ENCODE measurements at regions of chr18 and their contacts with region 1.

Region 1: DNA sequence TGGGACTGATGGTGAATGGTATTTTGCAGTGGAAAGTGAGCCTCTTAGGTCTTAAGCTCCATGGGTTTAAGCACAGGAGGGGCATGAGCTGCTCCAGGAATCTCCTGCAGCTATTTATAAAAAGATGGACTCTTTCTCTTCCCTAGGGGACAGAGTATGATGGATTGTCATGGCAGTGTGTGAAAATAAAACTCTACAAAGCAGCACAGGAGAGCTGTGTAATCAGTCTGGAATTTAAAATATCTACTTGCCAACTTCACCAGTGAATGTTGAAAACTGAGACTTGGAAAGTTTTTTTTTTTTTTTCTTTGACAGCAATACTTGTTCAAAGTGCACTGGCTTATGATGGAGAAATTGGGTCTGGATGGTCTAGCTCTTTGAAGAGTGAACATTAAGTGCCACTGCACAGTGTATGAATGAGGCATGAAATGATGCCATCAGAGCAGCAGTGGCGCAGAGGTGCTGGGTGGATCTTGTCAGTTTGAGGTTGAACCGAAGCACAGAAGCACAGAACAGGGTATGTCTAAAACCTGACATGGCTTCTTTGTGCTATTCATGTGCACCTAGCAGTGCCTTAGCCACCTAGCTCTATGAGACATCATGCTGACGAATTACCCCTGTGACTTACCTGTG is 245.4 kb downstream of the PTPRM start:
- DNase-seq: peak; percentile 80
- ATAC-seq: peak; percentile 94
- H3K4me3 ChIP-seq: no peak overlapping the region
- H3K27ac ChIP-seq: peak overlapping the region; percentile 52
- H3K4me1 ChIP-seq: peaks cover 24% of the 10 kb centered on the region
- H3K27me3 ChIP-seq: no peaks in the 10 kb centered on the region
- CTCF ChIP-seq: no peak
- EP300 ChIP-seq: no peak
- POLR2A ChIP-seq: no peak
- RAD21 ChIP-seq: no peak

Region 2: DNA sequence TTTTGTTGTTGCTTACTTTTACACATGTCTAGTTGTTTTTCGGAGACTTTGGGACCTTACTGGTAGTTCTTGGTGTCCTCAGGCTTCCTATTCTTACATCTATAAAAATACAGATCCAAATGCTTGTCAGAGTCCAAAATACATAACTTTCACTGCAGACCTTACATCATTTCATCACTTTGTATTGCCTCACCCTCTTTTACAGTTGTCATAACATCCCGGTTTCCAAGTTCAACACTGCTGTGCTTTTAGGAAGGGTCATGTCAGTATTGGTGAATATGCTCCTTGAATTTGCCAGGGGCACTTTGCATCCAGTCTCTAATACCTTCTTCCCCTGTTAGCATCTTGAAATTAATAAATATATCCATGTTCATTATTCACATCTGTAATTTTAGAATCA is 278.5 kb after region 1 on chr18:
- CTCF ChIA-PET with region 1: no interaction called
- POLR2A ChIA-PET with region 1: no interaction called
- in situ Hi-C with region 1: no loop called
- intact Hi-C with region 1: no loop called
- DNase-seq: no peak
- ATAC-seq: no peak
- H3K4me3 ChIP-seq: no peak overlapping the region
- H3K27ac ChIP-seq: no peak overlapping the region
- H3K4me1 ChIP-seq: no peaks in the 10 kb centered on the region
- H3K27me3 ChIP-seq: no peaks in the 10 kb centered on the region
- CTCF ChIP-seq: no peak
- EP300 ChIP-seq: no peak
- POLR2A ChIP-seq: no peak
- RAD21 ChIP-seq: no peak

Region 3: DNA sequence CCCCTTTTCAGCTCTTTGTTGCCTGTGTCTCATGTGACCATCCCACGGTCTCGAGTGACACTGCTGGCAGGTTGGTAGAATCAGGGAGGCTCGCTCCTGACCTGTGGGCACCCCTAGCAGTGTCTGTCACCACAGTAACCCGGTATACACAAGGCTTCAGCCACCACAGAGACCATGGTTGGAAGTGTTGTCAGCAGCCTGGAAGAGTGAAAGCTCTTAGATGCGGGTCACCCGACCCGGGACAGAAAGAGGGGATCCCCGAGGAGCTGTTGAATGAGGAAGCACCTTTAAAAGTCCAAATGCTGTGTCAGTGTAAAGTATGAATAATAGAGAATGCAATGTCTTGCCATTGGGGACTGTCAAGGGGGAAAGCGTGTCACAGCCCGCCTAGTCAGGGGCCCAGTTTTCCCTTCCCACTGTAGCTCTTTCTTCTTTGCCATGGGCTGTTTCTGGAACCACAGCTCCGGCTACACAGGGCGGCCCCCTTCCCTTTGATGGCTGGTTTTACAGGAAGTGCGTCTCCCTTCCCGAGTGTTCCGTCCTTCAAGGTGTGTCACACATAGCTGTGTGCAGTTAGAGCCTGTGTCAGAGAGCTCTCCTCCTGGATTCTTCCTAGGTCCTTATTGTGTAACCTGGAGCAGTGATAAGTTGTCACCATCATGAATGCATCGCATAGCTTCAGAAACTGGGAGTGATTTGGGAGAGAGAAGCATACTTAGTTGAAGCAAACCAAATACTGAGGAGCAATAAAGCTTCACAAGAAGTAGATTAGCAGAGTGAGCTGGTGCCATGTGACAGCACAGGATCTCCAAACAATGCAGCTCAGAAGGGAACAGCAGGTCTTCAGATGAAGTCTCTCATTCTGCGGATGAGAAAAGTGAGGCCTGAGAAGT is 974.2 kb after region 1 on chr18:
- CTCF ChIA-PET with region 1: no interaction called
- POLR2A ChIA-PET with region 1: no interaction called
- in situ Hi-C with region 1: no loop called
- intact Hi-C with region 1: loop called (anchors 5 kb)
- DNase-seq: no peak
- ATAC-seq: no peak
- H3K4me3 ChIP-seq: no peak overlapping the region
- H3K27ac ChIP-seq: no peak overlapping the region
- H3K4me1 ChIP-seq: peaks cover 11% of the 10 kb centered on the region
- H3K27me3 ChIP-seq: no peaks in the 10 kb centered on the region
- CTCF ChIP-seq: no peak
- EP300 ChIP-seq: no peak
- POLR2A ChIP-seq: no peak
- RAD21 ChIP-seq: no peak